CD8-positive, alpha-beta T cell (primary cell): ENCODE measurements at regions of chr9 and their contacts with region 1.

Region 1: DNA sequence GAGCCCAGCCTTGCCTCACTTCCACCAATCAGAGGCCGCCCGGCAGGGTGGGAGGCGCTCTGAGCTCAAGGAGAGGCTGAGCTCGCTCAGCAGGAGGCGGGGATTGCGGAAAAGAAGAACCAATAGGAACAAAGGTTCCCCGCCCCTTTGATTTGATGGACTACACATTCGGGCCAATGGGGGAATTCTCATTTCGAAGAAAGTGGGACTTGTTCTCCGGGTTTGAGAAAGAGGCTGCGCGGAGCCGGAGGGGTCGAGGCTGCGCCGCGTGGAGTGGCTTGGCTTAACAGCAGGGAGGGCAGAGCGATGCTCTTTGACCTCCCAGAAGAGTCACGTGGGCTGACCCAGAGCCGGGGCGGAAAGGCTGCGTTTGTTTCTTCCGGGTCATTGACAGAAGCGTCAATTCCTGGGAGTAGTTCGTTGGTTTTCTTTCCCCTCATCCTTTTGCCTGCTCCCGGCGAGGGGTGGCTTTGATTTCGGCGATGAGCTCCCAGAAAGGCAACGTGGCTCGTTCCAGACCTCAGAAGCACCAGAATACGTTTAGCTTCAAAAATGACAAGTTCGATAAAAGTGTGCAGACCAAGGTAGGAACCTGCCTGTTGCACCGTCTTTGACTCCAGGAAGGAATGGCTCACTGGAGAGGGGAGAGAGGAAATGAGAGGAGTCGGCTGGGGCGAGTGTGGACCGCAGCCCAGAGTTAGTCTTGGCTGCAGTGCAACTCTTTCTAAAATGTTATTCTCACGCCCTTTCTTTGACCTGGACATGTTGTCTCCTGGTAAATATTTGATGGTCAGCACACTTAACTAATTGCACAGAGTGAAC is at the start of gene C9orf85:
- DNase-seq: peak; percentile 91 to 99 (median 96)
- ATAC-seq: peak; percentile 93
- H3K4me3 ChIP-seq: peak within 1 kb of the TSS; percentile 80 to 89
- H3K4me3 Mint-ChIP-seq: peak within 1 kb of the TSS; percentile 99
- H3K27ac ChIP-seq: peak within 1 kb of the TSS; percentile 63 to 84
- H3K27ac Mint-ChIP-seq: peak within 1 kb of the TSS; percentile 96
- H3K4me1 ChIP-seq: peaks cover 26% of the 10 kb centered on the region
- H3K4me1 Mint-ChIP-seq: peaks cover 71% of the 10 kb centered on the region
- H3K27me3 ChIP-seq: no peaks in the 10 kb centered on the region
- H3K27me3 Mint-ChIP-seq: no peaks in the 10 kb centered on the region
- CTCF ChIP-seq: no peak
- total RNA-seq, gene C9orf85: 3.1 to 4.0 TPM

Region 2: GRCh38 chr9:71806901-71807307 is 104.6 kb before region 1 on chr9:
- CTCF ChIA-PET with region 1: interaction called, 5 read pairs
- POLR2A ChIA-PET with region 1: no interaction called
- intact Hi-C with region 1: loop called in 1 of 2 experiments (anchors 2 kb)
- DNase-seq: peak; percentile 12 to 80 (median 62)
- ATAC-seq: peak; percentile 96
- H3K4me3 ChIP-seq: no peak overlapping the region
- H3K4me3 Mint-ChIP-seq: no peak overlapping the region
- H3K27ac ChIP-seq: no peak overlapping the region
- H3K27ac Mint-ChIP-seq: peak overlapping the region; percentile 27
- H3K4me1 ChIP-seq: peaks cover 6% of the 10 kb centered on the region
- H3K4me1 Mint-ChIP-seq: peaks cover 15% of the 10 kb centered on the region
- H3K27me3 ChIP-seq: no peaks in the 10 kb centered on the region
- H3K27me3 Mint-ChIP-seq: no peaks in the 10 kb centered on the region
- CTCF ChIP-seq: peak; percentile 91

Region 3: DNA sequence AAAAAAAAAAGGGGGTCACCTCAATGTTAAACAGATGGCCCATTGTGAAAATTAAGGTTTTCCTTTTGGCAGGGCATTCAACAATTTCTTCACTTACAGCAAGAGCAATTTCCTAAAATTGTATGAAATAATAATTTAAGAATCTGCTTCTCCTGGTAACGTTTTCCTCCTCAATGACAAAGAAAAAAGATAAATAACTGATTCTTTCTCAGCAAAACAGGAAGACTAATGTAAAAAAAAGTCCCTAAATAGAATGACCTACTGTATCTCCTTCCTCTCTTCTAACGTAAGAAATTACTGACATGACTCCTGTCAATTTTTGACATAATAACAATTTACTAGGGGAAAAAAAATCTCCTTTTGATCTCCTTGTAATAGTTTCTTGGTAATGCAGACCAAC is 26.0 kb before region 1 on chr9:
- CTCF ChIA-PET with region 1: interaction called, 4 read pairs
- POLR2A ChIA-PET with region 1: interaction called, 3 read pairs
- intact Hi-C with region 1: loop called in 1 of 2 experiments (anchors 2 kb)
- DNase-seq: no peak
- ATAC-seq: no peak
- H3K4me3 ChIP-seq: no peak overlapping the region
- H3K4me3 Mint-ChIP-seq: no peak overlapping the region
- H3K27ac ChIP-seq: peak overlapping the region in 1 of 2 experiments; percentile 1
- H3K27ac Mint-ChIP-seq: no peak overlapping the region
- H3K4me1 ChIP-seq: peaks cover 16% of the 10 kb centered on the region
- H3K4me1 Mint-ChIP-seq: peaks cover 41% of the 10 kb centered on the region
- H3K27me3 ChIP-seq: no peaks in the 10 kb centered on the region
- H3K27me3 Mint-ChIP-seq: no peaks in the 10 kb centered on the region
- CTCF ChIP-seq: no peak

Region 4: GRCh38 chr9:71897577-71897976 is 13.9 kb before region 1 on chr9:
- CTCF ChIA-PET with region 1: interaction called, 3 read pairs
- POLR2A ChIA-PET with region 1: interaction called, 5 read pairs
- intact Hi-C with region 1: loop called in 1 of 2 experiments (anchors 1 kb)
- DNase-seq: peak in 3 of 9 experiments; percentile 9 to 71 (median 53)
- ATAC-seq: peak; percentile 78
- H3K4me3 ChIP-seq: no peak overlapping the region
- H3K4me3 Mint-ChIP-seq: peak overlapping the region; percentile 35
- H3K27ac ChIP-seq: peak overlapping the region in 1 of 2 experiments; percentile 69
- H3K27ac Mint-ChIP-seq: peak overlapping the region; percentile 19
- H3K4me1 ChIP-seq: peaks cover 54% of the 10 kb centered on the region
- H3K4me1 Mint-ChIP-seq: peaks cover 79% of the 10 kb centered on the region
- H3K27me3 ChIP-seq: no peaks in the 10 kb centered on the region
- H3K27me3 Mint-ChIP-seq: no peaks in the 10 kb centered on the region
- CTCF ChIP-seq: no peak